H1 (cell line): ENCODE measurements at regions of chr13 and their contacts with region 1.

Region 1: DNA sequence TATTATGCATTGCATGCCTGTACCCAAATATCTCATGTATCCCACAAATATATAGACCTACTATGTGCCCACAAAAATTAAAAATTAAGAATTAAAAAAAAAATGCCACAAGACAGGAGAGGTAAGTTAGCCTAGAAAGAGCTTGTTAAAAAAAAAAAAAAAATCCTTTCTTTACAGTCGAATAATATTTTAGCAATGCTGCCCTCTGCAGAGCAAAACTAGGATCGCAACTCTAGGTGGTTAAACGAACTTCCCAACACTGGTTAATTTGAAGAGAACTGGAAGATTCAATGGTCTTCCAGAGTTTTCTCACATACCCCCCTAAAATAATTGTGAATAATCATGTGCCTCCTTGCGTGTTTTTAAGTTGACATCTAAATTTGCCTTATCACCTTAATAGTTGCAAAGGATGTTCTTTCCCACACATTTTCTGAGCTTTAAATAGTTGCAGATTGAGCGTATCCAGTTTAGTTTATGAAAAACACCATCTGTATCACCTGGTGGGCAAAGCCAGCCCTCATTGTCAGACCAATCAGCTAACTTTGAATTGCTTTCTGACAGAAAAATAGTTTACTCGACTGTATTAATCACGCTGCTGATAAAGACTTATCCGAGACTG is 47.4 kb upstream of the RCBTB2 start:
- DNase-seq: peak in 1 of 2 experiments; percentile 83
- H3K4me3 ChIP-seq: no peak overlapping the region
- H3K27ac ChIP-seq: no peak overlapping the region
- H3K4me1 ChIP-seq: peaks cover 0 to 3% (median under 1%) of the 10 kb centered on the region in 4 experiments; a peak in 3 of 7 replicates
- H3K27me3 ChIP-seq: no peaks in the 10 kb centered on the region
- CTCF ChIP-seq: peak in 2 of 3 experiments; percentile 51 to 54; a peak in 3 of 4 replicates
- EP300 ChIP-seq: no peak
- POLR2A ChIP-seq: no peak
- RAD21 ChIP-seq: peak; percentile 72 to 78

Region 2: GRCh38 chr13:48595431-48596429 is 15.4 kb after region 1 on chr13:
- CTCF ChIA-PET with region 1: interaction called, 11 read pairs
- POLR2A ChIA-PET with region 1: interaction called, 3 read pairs
- DNase-seq: peak in 1 of 2 experiments; percentile 50
- H3K4me3 ChIP-seq: no peak overlapping the region
- H3K27ac ChIP-seq: no peak overlapping the region
- H3K4me1 ChIP-seq: peaks cover 8 to 25% (median 18%) of the 10 kb centered on the region in 4 experiments
- H3K27me3 ChIP-seq: no peaks in the 10 kb centered on the region
- CTCF ChIP-seq: peak; percentile 31 to 95 (median 57)
- EP300 ChIP-seq: no peak
- POLR2A ChIP-seq: no peak
- RAD21 ChIP-seq: peak; percentile 89 to 91